ENCODE measurements at regions of chr1 and their contacts with region 1.

Region 1: DNA sequence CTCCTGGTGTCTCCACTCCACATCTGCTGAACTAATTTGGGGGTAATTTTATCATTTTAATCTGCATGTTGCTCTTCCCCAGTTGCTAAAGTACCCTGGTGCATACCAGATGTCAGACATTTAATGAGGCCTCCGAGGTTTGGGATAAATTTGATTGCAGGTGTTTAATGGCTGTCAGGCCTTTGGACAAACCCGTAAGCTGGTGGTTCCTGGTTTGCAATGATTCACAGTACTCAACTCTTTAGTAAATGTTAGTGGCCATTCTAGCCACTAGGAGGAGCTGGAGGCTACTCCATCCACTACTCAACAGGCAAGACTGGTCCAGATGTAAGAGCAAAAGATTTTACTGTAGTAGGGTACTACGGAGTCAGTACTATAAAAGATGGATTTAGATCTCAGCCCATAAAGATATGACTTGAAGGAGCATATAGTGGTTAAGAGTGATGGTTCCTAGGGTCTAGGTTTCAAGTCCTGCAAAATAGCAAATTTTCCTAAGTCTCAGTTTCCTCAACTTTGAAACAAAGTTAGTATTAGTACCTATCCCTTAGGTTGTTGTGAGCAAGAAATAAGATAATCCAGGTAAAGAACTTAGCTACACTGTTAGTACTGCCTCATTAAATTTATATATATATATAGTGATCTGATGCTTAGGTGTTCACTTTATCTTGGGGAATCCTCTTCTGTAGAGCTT is 132.8 kb downstream of the SNX7 start:
- DNase-seq: peak; percentile 65 to 72 (median 70)
- H3K4me3 ChIP-seq: no peak overlapping the region
- H3K4me3 Mint-ChIP-seq: peak overlapping the region in 1 of 8 donors; percentile 60
- H3K27ac ChIP-seq: no peak overlapping the region
- H3K27ac Mint-ChIP-seq: no peak overlapping the region
- H3K4me1 ChIP-seq: peaks cover 18% of the 10 kb centered on the region
- H3K4me1 Mint-ChIP-seq: peaks cover 24 to 35% (median 26%) of the 10 kb centered on the region in 4 donors
- H3K27me3 ChIP-seq: no peaks in the 10 kb centered on the region
- H3K27me3 Mint-ChIP-seq: no peaks in the 10 kb centered on the region

Region 2: DNA sequence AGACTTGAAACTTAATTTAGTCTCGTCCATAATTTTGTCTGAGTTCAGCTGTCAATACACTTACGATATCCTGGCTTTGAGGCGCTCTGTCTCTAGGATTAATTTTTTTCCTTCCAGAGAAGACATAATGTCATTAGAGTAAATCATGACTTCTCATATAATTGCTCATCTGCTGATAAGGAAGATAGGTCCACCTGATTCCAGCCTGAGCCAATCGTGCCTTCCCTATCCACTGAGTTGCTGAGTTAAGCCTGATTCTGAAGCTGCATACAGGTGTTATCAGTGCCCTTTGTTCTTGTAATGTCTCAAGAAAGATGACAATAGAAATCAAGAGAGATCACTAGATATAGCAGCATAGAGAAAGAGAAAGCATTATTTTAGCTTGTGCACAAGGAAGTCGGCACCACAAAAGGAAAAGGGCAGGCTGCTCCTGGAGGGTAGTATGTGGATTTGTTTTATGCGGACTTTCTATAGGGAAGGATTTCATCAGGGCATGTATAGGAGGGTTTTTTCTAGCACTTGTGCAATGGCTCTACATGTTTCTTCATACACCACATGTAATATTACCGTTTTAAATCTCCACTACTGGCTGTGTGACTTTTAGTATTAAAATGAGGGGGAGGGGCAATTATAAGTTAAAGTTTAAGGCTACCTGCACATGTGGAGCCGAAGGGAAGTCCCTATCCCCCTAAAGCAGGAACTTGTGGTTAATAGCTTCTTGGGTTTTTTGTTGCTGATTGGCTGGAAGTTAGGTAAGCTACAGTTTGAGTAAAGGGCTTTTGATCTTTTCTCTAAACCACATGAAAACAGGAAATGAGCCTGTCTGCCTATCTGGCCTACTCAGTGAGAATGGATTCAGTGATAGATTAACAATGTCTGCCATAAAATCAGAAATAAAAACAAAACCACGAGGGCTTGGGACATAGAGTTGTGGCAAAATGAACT is 76.9 kb after region 1 on chr1:
- CTCF ChIA-PET with region 1: interaction called, 13 read pairs
- POLR2A ChIA-PET with region 1: interaction called, 14 read pairs
- intact Hi-C with region 1: loop called (anchors 1 kb)
- DNase-seq: peak; percentile 85 to 95 (median 91)
- H3K4me3 ChIP-seq: peak overlapping the region; percentile 12 to 62
- H3K4me3 Mint-ChIP-seq: peak overlapping the region; percentile 84 to 92 (median 86)
- H3K27ac ChIP-seq: peak overlapping the region; percentile 66
- H3K27ac Mint-ChIP-seq: peak overlapping the region; percentile 89 to 98 (median 93)
- H3K4me1 ChIP-seq: peaks cover 26% of the 10 kb centered on the region
- H3K4me1 Mint-ChIP-seq: peaks cover 19 to 49% (median 35%) of the 10 kb centered on the region in 4 donors
- H3K27me3 ChIP-seq: no peaks in the 10 kb centered on the region
- H3K27me3 Mint-ChIP-seq: no peaks in the 10 kb centered on the region

Region 3: GRCh38 chr1:98991127-98992012 is 197.0 kb after region 1 on chr1:
- CTCF ChIA-PET with region 1: interaction called, 5 read pairs
- POLR2A ChIA-PET with region 1: no interaction called
- intact Hi-C with region 1: loop called (anchors 2 kb)
- DNase-seq: peak in 3 of 5 donors; percentile 1 to 21 (median 7)
- H3K4me3 ChIP-seq: no peak overlapping the region
- H3K4me3 Mint-ChIP-seq: no peak overlapping the region
- H3K27ac ChIP-seq: no peak overlapping the region
- H3K27ac Mint-ChIP-seq: peak overlapping the region in 3 of 7 donors; percentile 2 to 24 (median 3)
- H3K4me1 ChIP-seq: no peaks in the 10 kb centered on the region
- H3K4me1 Mint-ChIP-seq: peaks cover 0 to 7% (median 6%) of the 10 kb centered on the region in 4 donors
- H3K27me3 ChIP-seq: no peaks in the 10 kb centered on the region
- H3K27me3 Mint-ChIP-seq: no peaks in the 10 kb centered on the region

Region 4: DNA sequence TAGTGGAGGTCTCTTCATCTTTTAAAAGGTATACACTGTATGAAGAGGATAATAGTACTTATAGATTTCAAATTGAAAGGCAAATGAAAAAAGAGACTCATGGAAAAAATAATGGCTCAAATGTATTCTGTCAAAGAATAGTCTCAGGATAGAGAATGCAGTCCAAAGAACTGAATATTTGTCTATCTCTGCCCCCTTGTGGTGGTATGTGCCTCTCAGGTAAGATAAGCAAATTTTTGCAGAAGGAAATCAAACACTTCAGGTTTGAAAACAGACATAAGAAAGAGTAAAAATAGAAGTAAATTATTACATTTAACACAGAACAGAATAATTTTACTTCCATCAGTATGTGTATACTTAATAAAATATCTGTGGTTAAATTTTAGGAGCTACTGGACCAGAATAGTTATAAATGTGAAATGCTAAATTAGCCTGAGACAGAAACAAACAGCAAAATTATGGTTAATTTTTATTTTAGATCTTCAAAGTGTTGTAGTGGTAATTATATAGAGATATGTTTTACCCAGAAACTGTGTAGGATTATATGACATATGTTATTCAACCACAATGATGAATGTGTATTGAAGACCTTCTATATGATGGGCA is 687.2 kb after region 1 on chr1:
- CTCF ChIA-PET with region 1: interaction called, 40 read pairs
- POLR2A ChIA-PET with region 1: no interaction called
- intact Hi-C with region 1: no loop called
- DNase-seq: peak; percentile 17 to 53 (median 47)
- H3K4me3 ChIP-seq: no peak overlapping the region
- H3K4me3 Mint-ChIP-seq: no peak overlapping the region
- H3K27ac ChIP-seq: no peak overlapping the region
- H3K27ac Mint-ChIP-seq: no peak overlapping the region
- H3K4me1 ChIP-seq: no peaks in the 10 kb centered on the region
- H3K4me1 Mint-ChIP-seq: no peaks in the 10 kb centered on the region
- H3K27me3 ChIP-seq: no peaks in the 10 kb centered on the region
- H3K27me3 Mint-ChIP-seq: peaks cover 7 to 8% of the 10 kb centered on the region in 2 donors

Region 5: GRCh38 chr1:99707535-99708142 is 913.3 kb after region 1 on chr1:
- CTCF ChIA-PET with region 1: interaction called, 9 read pairs
- POLR2A ChIA-PET with region 1: no interaction called
- intact Hi-C with region 1: loop called (anchors 1 kb)
- DNase-seq: peak in 4 of 5 donors; percentile 31 to 43 (median 40)
- H3K4me3 ChIP-seq: no peak overlapping the region
- H3K4me3 Mint-ChIP-seq: no peak overlapping the region
- H3K27ac ChIP-seq: no peak overlapping the region
- H3K27ac Mint-ChIP-seq: no peak overlapping the region
- H3K4me1 ChIP-seq: peaks cover 21% of the 10 kb centered on the region
- H3K4me1 Mint-ChIP-seq: peaks cover 14 to 29% (median 15%) of the 10 kb centered on the region in 4 donors
- H3K27me3 ChIP-seq: no peaks in the 10 kb centered on the region
- H3K27me3 Mint-ChIP-seq: no peaks in the 10 kb centered on the region